ENCODE measurements at regions of chr7 and their contacts with region 1.

Region 1: DNA sequence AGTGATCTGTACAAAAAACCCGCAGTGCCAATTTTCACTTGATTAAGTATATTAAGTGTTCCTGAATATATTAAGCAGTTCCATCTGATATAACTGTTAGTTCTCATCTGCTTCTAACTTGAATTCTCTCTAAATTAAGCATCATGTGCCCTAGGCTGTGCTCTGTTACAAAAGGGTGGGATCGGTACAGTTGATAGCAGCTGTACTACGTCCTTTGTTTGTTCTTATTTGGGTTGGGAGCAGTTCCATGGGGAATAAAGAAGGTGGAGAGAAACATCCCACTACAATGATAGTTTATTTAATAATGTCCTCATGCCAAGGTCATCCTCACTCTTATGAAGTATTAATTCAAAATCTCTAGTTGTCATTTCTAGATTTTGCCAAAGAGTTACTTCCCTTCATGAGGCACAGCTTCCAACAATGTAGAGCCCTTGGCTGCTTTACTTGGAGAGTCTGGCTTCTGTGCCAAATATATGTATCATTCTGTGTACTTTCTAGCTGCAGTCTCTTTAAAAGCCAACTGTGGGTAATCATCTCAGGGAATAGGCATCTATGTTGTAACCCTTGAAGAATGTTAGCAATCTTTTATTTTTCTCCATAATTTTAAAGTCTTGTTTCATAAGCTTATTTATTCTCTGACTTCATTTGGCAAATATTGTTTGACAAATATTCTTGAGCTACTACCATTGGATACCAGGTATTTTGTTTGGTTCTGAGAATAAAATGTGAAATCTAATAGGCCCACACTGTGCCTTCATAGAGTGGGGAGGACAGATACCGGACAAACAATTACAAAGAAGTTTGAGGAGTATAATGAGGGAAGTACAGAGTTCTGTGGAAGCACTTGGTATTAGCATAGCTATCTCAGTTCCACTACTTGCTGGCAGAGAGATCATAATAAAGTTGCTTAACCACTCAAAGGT is 22.4 kb upstream of the AHR start:
- DNase-seq: no peak
- H3K4me3 ChIP-seq: no peak overlapping the region
- H3K27ac ChIP-seq: no peak overlapping the region
- H3K4me1 ChIP-seq: peaks cover 11 to 41% (median 20%) of the 10 kb centered on the region in 4 experiments
- H3K27me3 ChIP-seq: no peaks in the 10 kb centered on the region

Region 2: GRCh38 chr7:17289074-17289645 is 13.2 kb after region 1 on chr7:
- CTCF ChIA-PET with region 1: interaction called, 12 read pairs
- POLR2A ChIA-PET with region 1: no interaction called
- DNase-seq: peak in 1 of 3 donors; percentile 40
- H3K4me3 ChIP-seq: no peak overlapping the region
- H3K27ac ChIP-seq: no peak overlapping the region
- H3K4me1 ChIP-seq: peaks cover 5 to 19% (median 14%) of the 10 kb centered on the region in 4 experiments
- H3K27me3 ChIP-seq: no peaks in the 10 kb centered on the region